Ovary (tissue), 10 donors: ENCODE measurements at regions of chr6 and their contacts with region 1.

Region 1: GRCh38 chr6:141667580-141668309 is 465.0 kb upstream of the GJE1 start:
- DNase-seq: no peak
- H3K4me3 ChIP-seq: no peak overlapping the region
- H3K27ac ChIP-seq: no peak overlapping the region
- H3K4me1 ChIP-seq: no peaks in the 10 kb centered on the region
- H3K27me3 ChIP-seq: no peaks in the 10 kb centered on the region
- CTCF ChIP-seq: no peak
- EP300 ChIP-seq: no peak
- POLR2A ChIP-seq: no peak

Region 2: DNA sequence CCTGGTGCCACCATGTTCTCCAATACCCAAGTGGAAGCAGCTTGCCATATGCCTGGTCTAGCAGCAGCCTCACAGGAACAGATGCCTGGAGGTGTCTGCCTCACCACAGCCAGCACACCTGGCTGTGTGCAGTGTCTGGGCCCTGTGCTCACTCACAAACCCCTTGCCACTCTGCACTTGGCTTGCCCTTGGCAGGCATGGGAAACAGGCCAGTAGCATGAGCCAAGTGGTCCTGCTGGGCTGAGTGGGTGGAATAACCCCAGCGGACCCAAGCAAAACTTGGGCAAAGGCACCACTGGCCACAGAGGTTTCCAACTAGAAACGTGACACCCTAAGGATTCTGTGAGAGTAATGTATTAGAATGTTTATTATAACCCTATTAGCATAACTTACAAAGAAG is 135.5 kb before region 1 on chr6:
- intact Hi-C with region 1: no loop called
- DNase-seq: no peak
- H3K4me3 ChIP-seq: no peak overlapping the region
- H3K27ac ChIP-seq: no peak overlapping the region
- H3K4me1 ChIP-seq: no peaks in the 10 kb centered on the region
- H3K27me3 ChIP-seq: no peaks in the 10 kb centered on the region
- CTCF ChIP-seq: no peak
- EP300 ChIP-seq: no peak
- POLR2A ChIP-seq: no peak

Region 3: DNA sequence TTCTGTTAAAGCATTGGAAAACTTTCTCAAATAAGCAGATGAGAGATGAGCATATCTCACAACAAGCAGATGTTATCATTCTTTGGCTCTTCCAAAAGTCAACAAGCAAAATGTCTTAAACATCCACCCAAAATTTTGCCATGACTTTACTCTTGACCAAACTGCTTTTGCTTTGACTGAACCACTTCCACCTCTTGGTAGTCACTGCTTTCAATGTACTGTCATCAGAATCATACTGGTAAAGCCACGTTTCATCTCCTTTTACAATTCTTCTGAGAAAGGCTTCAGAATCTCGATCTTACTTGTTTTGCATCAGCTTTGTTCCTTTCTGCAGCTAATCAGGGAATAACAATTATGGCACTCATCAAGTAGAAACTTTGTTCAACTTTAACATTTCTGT is 33.5 kb before region 1 on chr6:
- intact Hi-C with region 1: loop called in 1 of 4 experiments (anchors 1 kb)
- DNase-seq: no peak
- H3K4me3 ChIP-seq: no peak overlapping the region
- H3K27ac ChIP-seq: no peak overlapping the region
- H3K4me1 ChIP-seq: no peaks in the 10 kb centered on the region
- H3K27me3 ChIP-seq: no peaks in the 10 kb centered on the region
- CTCF ChIP-seq: no peak
- EP300 ChIP-seq: no peak
- POLR2A ChIP-seq: no peak

Region 4: GRCh38 chr6:141752677-141753076 is 84.9 kb after region 1 on chr6:
- intact Hi-C with region 1: no loop called
- DNase-seq: no peak
- H3K4me3 ChIP-seq: no peak overlapping the region
- H3K27ac ChIP-seq: no peak overlapping the region
- H3K4me1 ChIP-seq: no peaks in the 10 kb centered on the region
- H3K27me3 ChIP-seq: no peaks in the 10 kb centered on the region
- CTCF ChIP-seq: no peak
- EP300 ChIP-seq: no peak
- POLR2A ChIP-seq: no peak

Region 5: DNA sequence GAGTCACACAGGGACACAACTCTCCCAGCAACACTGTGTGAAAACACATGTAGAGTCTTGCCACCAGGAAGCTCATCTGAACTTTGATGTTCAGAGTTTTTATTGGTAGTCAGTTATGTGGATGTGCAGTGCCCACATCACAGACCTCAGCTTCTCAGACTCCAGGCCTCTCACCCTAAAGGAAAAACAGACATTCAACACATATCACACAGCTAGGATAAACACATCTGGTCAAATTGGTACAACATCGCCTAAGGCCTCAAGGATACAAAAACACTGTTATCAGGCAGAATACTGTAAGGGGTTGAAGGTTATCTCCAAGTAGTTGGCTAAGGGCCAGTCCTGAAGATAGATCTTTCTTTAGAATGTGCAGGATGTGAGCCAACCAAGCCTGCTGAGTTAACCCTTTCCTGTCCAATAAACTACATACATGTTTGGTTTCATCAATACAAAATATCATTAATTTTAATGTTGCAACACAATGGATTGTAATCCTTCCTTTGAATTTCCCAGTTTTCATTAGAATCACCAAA is 156.6 kb after region 1 on chr6:
- intact Hi-C with region 1: no loop called
- DNase-seq: no peak
- H3K4me3 ChIP-seq: no peak overlapping the region
- H3K27ac ChIP-seq: no peak overlapping the region
- H3K4me1 ChIP-seq: no peaks in the 10 kb centered on the region
- H3K27me3 ChIP-seq: no peaks in the 10 kb centered on the region
- CTCF ChIP-seq: no peak
- EP300 ChIP-seq: no peak
- POLR2A ChIP-seq: no peak

Region 6: GRCh38 chr6:141925001-141925400 is 257.3 kb after region 1 on chr6:
- intact Hi-C with region 1: no loop called
- DNase-seq: no peak
- H3K4me3 ChIP-seq: no peak overlapping the region
- H3K27ac ChIP-seq: no peak overlapping the region
- H3K4me1 ChIP-seq: no peaks in the 10 kb centered on the region
- H3K27me3 ChIP-seq: no peaks in the 10 kb centered on the region
- CTCF ChIP-seq: no peak
- EP300 ChIP-seq: no peak
- POLR2A ChIP-seq: no peak